ENCODE measurements at regions of chr1 and their contacts with region 1.

Region 1: DNA sequence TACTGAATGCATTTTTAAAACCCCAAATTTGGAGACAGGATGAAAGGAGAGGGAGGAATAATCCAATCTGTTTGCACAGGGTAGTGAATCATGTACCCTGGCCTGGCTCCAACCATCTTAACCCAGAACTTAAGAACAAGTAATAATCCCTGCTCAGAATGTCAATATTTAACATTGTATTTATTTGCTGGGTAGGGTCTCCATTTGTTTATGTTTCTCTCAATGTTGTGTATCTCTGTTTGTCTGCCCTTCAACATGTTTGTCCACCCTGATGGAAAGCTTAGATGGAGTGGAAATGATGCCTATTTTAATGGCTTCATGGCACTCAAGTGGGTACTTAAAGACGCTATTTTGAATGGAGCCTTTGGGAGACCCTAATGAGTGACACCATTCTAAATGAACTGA is 54.4 kb upstream of the CDC42BPA start:
- DNase-seq: peak; percentile 19
- H3K4me3 ChIP-seq: no peak overlapping the region
- H3K27ac ChIP-seq: no peak overlapping the region
- H3K4me1 ChIP-seq: no peaks in the 10 kb centered on the region
- H3K27me3 ChIP-seq: no peaks in the 10 kb centered on the region
- CTCF ChIP-seq: no peak

Region 2: GRCh38 chr1:227449051-227449450 is 76.3 kb after region 1 on chr1:
- CTCF ChIA-PET with region 1: no interaction called
- dilution Hi-C with region 1: no loop called
- in situ Hi-C with region 1: no loop called
- intact Hi-C with region 1: no loop called
- DNase-seq: no peak
- H3K4me3 ChIP-seq: no peak overlapping the region
- H3K27ac ChIP-seq: no peak overlapping the region
- H3K4me1 ChIP-seq: no peaks in the 10 kb centered on the region
- H3K27me3 ChIP-seq: no peaks in the 10 kb centered on the region
- CTCF ChIP-seq: peak; percentile 45 to 53

Region 3: GRCh38 chr1:227459326-227459841 is 86.7 kb after region 1 on chr1:
- CTCF ChIA-PET with region 1: no interaction called
- dilution Hi-C with region 1: loop called (anchors 5 kb)
- in situ Hi-C with region 1: no loop called
- intact Hi-C with region 1: no loop called
- DNase-seq: no peak
- H3K4me3 ChIP-seq: no peak overlapping the region
- H3K27ac ChIP-seq: no peak overlapping the region
- H3K4me1 ChIP-seq: no peaks in the 10 kb centered on the region
- H3K27me3 ChIP-seq: peaks cover 2% of the 10 kb centered on the region
- CTCF ChIP-seq: no peak